Naive thymus-derived CD8-positive, alpha-beta T cell (primary cell): ENCODE measurements at regions of chr11 and their contacts with region 1.

Region 1: GRCh38 chr11:18105802-18106574 is at the start of gene SAAL1:
- DNase-seq: peak; percentile 75 to 92 (median 85)
- ATAC-seq: peak; percentile 98 to 99
- H3K4me3 Mint-ChIP-seq: peak within 1 kb of the TSS; percentile 89 to 97 (median 94)
- H3K27ac Mint-ChIP-seq: peak within 1 kb of the TSS; percentile 77 to 96 (median 86)
- H3K4me1 Mint-ChIP-seq: peaks cover 15 to 38% (median 24%) of the 10 kb centered on the region in 4 donors
- H3K27me3 Mint-ChIP-seq: peaks cover 2 to 12% (median 10%) of the 10 kb centered on the region in 5 donors
- polyA plus RNA-seq, gene SAAL1: 8.1 to 14.4 (median 13.1) TPM

Region 2: GRCh38 chr11:18012863-18013781 is 92.9 kb before region 1 on chr11 and contains the start of gene SERGEF:
- POLR2A ChIA-PET with region 1: interaction called, 17 read pairs
- DNase-seq: peak; percentile 82 to 95 (median 88)
- ATAC-seq: peak; percentile 81 to 87
- H3K4me3 Mint-ChIP-seq: peak within 1 kb of the TSS; percentile 89 to 99 (median 99)
- H3K27ac Mint-ChIP-seq: peak within 1 kb of the TSS; percentile 94 to 100 (median 98)
- H3K4me1 Mint-ChIP-seq: peaks cover 25 to 45% (median 34%) of the 10 kb centered on the region in 4 donors
- H3K27me3 Mint-ChIP-seq: no peaks in the 10 kb centered on the region
- polyA plus RNA-seq, gene SERGEF: 61.8 to 70.3 (median 69.3) TPM

Region 3: GRCh38 chr11:18132341-18132740 is 26.4 kb after region 1 on chr11 and contains the start of gene MRGPRX3:
- POLR2A ChIA-PET with region 1: no interaction called
- DNase-seq: no peak
- ATAC-seq: no peak
- H3K4me3 Mint-ChIP-seq: no peak within 1 kb of the TSS
- H3K27ac Mint-ChIP-seq: no peak within 1 kb of the TSS
- H3K4me1 Mint-ChIP-seq: no peaks in the 10 kb centered on the region
- H3K27me3 Mint-ChIP-seq: peaks cover 26 to 81% (median 50%) of the 10 kb centered on the region in 5 donors
- polyA plus RNA-seq, gene MRGPRX3: not detected

Region 4: GRCh38 chr11:18151581-18151980 is 45.6 kb after region 1 on chr11:
- POLR2A ChIA-PET with region 1: no interaction called
- DNase-seq: no peak
- ATAC-seq: no peak
- H3K4me3 Mint-ChIP-seq: no peak overlapping the region
- H3K27ac Mint-ChIP-seq: no peak overlapping the region
- H3K4me1 Mint-ChIP-seq: no peaks in the 10 kb centered on the region
- H3K27me3 Mint-ChIP-seq: peaks cover 17 to 56% (median 26%) of the 10 kb centered on the region in 5 donors